Activated CD8-positive, alpha-beta memory T cell treated with anti-CD3 and anti-CD28 coated beads, Interleukin-2, amount 10 ng/mL, durations not matched to agents 7 days and 5 days (primary cell): ENCODE measurements at regions of chr7 and their contacts with region 1.

Region 1: DNA sequence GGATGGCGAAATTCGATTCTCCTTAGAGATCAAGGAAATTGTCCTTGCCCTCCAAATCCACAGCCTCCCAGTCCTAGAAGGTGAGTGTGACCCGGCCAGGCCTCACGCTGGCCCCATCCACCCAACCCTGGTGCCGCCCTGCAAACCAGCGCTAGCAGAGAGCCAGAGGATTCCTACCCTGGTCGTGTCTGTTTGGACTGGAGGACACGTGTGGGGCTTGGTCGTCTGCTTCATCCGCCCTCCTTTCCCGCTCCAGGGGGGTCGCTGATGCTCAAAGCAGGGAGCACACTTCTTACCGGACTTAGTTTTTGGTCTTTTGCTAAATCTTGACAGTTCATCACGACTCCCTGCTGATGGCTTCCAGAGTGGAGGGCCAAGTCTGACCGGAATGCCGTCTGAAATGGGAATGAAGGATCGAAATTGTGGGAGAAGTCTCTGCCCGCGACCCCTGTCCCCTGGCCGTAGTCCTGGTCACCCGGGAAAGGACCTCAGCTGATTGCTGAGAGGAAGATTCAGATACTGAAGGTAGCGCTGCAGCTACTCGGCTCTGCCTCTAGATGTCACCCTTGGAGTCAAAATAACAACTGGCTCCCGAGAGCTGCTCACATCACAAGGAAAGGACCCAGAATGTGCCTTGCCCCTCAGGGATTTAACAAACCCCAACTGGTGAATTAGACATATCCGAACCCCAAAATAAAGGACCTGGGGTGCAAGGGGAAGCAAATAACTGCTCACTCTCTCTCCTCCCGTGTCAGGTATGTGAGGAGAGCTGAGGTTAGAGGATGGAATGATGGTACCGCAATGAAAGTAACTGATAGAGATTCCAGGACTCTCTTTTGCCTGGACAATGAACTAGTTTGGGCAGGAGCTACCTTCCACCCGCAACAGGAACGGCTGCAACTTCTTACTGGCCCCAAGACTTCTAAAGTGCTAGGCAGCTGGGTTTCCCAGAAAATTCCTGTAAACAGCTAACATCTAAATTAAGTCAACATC is 23.5 kb upstream of the ORC5 start:
- DNase-seq: peak; percentile 64
- ATAC-seq: peak; percentile 76
- H3K4me3 Mint-ChIP-seq: no peak overlapping the region
- H3K27ac Mint-ChIP-seq: no peak overlapping the region
- H3K4me1 Mint-ChIP-seq: peaks cover 1% of the 10 kb centered on the region
- H3K27me3 Mint-ChIP-seq: peaks cover 30% of the 10 kb centered on the region

Region 2: DNA sequence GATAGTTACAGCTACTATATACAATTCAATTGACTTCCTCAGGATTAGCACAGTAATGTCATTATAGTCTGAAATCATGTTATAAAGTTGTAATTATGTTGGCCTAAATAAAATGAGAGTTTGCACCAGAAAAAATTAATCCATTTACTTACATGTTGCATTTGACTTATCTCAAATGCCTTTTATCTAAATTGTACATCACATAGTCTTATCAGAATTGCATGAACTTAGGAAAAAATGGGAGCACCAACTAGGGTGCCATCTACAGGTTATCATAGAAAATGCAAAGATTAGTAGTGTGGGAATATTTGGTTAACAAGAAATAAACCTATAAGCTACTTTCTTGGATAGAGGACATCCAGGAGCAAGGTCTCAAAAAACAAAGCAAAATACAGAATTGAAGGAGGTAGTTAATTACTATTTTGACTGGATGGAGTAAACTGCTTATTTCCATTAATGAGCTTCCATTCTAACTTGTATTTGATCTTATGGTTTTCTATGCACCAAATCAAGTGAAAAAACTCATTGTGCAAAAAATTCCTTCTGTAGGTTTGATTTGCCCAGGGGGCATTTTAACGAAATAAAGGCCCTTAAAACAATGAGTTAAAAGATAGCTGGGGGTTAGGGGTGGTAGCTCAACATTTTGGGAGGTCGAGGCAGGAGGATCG is 36.5 kb after region 1 on chr7:
- CTCF ChIA-PET with region 1: interaction called, 13 read pairs
- DNase-seq: no peak
- ATAC-seq: no peak
- H3K4me3 Mint-ChIP-seq: no peak overlapping the region
- H3K27ac Mint-ChIP-seq: no peak overlapping the region
- H3K4me1 Mint-ChIP-seq: no peaks in the 10 kb centered on the region
- H3K27me3 Mint-ChIP-seq: peaks cover 17% of the 10 kb centered on the region

Region 3: DNA sequence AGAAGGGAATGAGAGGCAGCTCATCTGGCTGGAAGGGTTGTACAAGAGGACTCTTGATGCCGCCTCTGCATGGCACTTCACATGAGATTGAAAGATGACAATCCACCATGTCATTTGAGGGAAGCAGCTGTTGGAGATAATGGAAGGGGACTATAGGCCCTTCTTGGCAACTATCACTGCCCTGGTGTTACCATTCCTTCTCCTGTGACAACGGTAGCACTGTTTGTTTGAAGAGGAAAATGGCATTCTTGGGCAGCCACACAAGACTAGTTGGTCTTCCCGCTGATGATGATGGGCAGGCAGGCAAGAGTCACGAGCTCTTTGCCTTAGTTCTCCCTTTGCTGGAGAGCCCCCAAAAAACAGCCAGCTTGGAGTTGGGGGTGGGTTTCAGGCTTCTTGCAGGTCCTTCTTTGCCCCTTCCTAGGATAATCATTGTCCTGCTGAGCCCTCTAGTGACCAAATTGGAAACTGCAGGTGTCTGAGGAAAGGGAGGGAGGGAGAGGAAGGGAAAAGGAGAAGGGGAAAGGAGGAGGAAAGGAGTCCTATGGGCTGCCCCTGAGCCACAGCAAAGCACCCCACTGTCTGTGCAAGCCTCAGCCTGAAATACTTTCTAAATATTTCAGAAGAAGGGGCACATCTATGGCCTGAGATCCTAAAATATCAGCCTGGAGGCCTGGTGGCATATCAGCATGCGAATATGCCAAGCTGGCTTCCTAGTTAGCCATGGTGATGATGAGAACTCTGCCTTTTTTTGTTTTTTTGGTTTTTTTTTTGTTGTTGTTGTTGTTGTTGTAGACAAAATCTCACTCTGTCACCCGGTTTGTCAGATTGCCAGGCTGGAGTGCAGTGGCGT is 617.0 kb after region 1 on chr7:
- CTCF ChIA-PET with region 1: interaction called, 14 read pairs
- DNase-seq: peak; percentile 61
- ATAC-seq: peak; percentile 55
- H3K4me3 Mint-ChIP-seq: no peak overlapping the region
- H3K27ac Mint-ChIP-seq: no peak overlapping the region
- H3K4me1 Mint-ChIP-seq: no peaks in the 10 kb centered on the region
- H3K27me3 Mint-ChIP-seq: peaks cover 24% of the 10 kb centered on the region